ENCODE measurements at regions of chr1 and their contacts with region 1.

Region 1: GRCh38 chr1:20640183-20640597 is 6.9 kb downstream of the PINK1 start:
- DNase-seq: no peak
- H3K4me3 ChIP-seq: no peak overlapping the region
- H3K27ac ChIP-seq: no peak overlapping the region
- H3K4me1 ChIP-seq: peaks cover 22% of the 10 kb centered on the region
- H3K27me3 ChIP-seq: no peaks in the 10 kb centered on the region
- CTCF ChIP-seq: peak; percentile 83

Region 2: GRCh38 chr1:20521960-20522861 is 118.0 kb before region 1 on chr1:
- intact Hi-C with region 1: loop called (anchors 5 kb)
- DNase-seq: peak; percentile 38
- H3K4me3 ChIP-seq: peak overlapping the region; percentile 15
- H3K27ac ChIP-seq: no peak overlapping the region
- H3K4me1 ChIP-seq: peaks cover 3% of the 10 kb centered on the region
- H3K27me3 ChIP-seq: peaks cover 21% of the 10 kb centered on the region
- CTCF ChIP-seq: peak; percentile 92

Region 3: DNA sequence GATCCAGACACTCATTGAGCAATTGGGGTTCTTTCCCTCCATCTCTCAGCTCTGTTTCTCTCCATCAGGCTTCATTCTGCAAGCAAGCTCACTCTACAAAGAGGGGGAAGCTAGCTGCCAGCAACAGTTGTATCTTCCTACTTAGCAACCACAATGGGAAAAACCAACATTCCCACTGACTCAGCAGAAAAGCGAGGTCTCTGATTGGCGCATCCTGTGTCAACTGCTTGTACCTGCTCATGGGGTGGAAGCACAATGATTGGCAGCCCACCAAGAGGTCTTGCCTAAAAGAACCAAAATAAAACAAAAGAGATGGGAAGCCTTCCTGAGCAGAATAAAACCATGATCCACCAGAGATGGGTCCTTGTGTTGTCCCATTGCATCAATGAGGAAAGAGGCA is 55.3 kb before region 1 on chr1:
- intact Hi-C with region 1: no loop called
- DNase-seq: no peak
- H3K4me3 ChIP-seq: no peak overlapping the region
- H3K27ac ChIP-seq: no peak overlapping the region
- H3K4me1 ChIP-seq: peaks cover 14% of the 10 kb centered on the region
- H3K27me3 ChIP-seq: peaks cover 39% of the 10 kb centered on the region
- CTCF ChIP-seq: no peak

Measured in left ventricle myocardium inferior (tissue), 1 donor.